AG04449 (cell line): ENCODE measurements at regions of chr9 and their contacts with region 1.

Region 1: DNA sequence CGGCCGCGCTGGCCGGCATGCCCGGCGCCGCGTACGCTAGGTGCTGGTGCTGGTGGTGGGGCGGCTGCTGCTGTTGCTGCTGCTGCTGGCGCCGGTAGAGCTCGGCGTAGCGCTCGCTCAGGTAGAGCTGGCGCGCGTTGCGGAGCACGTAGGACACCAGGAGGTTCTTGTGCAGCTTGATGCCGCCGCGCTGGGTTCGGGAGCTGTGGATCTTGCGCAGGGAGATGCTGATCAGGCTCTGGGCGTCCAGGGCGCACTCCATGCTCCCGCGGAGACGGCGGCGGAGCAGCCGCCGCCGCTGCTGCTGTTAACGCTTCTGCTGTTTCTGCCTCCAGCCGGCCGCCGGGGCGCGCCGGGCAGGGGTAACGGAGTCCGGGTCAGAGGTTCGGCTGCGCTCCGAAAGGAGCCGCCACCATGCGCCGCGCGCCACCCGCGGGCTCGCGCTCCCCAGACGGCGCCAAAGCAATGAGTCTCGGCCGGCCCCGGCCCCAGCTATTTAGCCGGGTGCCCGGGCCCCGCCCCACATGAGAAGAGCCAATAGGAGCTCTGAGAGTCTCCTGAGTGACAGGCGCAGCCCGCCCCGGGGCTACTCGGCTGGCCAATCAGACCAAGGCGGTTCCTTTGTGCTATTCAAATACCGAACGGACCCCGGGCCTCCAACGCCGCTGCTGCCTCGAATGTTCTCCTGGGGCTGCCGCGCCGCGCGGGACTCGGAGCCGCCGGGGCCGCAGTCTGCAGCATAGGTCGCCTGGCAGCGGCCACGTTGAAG is at the start of gene IER5L:
- DNase-seq: no peak
- H3K4me3 ChIP-seq: peak within 1 kb of the TSS; percentile 94
- CTCF ChIP-seq: no peak

Region 2: DNA sequence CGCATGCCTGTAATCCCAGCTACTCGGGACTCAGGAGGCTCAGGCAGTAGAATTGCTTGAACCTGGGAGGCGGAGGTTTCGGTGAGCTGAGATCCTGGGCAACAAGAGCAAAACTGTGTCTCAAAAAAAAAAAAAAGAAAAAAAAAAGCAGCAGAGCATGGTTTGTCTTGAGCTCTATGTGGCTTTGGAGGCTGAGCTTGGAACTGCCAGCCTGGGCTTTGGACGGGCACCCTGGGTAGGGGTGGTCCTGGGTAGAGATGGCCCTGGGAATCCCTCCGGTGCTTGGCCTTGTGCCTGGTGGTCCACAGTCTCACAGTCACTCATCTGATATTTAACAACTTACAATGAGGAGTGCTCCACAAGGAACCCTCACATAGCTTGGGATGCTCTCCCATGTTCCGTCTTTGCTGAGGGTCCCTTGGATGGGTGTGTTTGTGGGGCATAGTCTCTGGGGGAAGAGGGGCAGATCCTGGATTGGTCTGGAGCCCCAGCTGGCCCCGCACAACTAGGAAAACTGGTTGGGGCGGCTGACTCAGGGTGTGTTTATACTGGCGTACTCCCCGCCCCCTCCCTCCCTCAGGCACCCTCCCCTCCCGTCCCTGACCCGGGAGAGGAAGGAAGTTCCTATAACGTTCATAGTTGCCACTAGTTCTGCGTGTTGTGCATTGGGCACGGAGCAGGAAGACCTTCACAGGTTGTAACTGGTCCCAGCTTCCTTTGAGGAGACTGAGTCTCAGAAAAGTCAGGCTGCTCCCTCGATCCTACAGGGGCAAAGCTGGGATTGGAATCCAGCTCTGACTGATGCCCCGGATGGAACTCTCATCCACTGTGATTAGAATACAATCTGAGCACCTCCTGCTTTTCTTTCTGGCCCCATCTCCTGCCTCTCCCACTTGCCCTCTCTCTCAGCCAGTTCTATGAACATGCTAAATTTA is 11.1 kb before region 1 on chr9:
- CTCF ChIA-PET with region 1: interaction called, 51 read pairs
- POLR2A ChIA-PET with region 1: interaction called, 20 read pairs
- DNase-seq: no peak
- H3K4me3 ChIP-seq: peak overlapping the region; percentile 9
- CTCF ChIP-seq: no peak

Region 3: GRCh38 chr9:129320575-129321263 is 142.7 kb after region 1 on chr9:
- CTCF ChIA-PET with region 1: interaction called, 12 read pairs
- POLR2A ChIA-PET with region 1: interaction called, 25 read pairs
- DNase-seq: peak; percentile 63
- H3K4me3 ChIP-seq: peak overlapping the region; percentile 61
- CTCF ChIP-seq: no peak

Region 4: DNA sequence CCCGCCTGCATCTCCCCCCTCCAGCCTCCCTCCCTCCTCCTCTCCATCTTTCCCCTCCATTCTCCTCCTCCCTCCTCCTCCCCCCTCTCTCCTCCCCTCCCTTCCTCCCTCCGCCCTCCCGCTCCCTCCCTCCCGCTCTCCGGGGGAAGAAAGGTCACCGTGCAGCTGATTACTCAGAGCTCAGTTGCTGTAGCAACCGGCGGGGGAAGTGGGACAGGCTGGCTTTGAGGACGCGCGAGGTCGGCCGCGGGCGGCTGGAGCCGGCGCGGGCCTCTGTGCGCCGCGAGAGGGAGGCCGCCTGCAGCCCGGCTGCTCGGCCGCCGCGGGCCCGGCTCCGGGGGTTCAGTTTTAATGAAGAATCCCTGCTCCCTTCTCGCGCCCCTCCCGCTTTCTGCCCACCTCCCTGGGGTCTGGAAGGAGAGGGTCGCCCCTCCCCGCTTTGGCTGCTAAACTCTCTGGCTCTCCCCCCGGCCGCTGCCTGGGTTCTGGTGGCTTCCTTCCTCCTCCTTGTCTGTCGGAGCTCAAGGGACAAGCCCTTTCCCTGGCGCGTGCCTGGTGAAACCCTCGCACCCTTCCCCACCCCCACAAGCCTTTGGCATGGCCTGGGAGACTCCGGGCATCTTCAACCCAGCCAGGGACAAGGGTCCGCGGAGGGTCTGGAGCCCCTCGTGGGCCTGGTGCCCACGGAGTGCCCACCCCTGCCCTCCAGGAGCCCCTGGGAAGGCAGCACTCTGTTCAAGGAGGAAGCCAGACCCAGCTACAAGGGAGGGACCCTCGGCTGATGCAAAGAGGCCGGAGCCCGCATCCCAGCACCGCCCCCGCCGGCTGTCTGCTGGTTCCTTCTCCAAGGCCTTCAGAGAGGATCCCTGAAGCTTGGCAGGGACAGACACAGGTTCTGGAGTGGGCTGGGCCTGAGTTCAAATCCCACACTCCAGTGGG is 282.6 kb after region 1 on chr9:
- CTCF ChIA-PET with region 1: interaction called, 20 read pairs
- POLR2A ChIA-PET with region 1: interaction called, 23 read pairs
- DNase-seq: peak; percentile 92
- H3K4me3 ChIP-seq: peak overlapping the region; percentile 53
- CTCF ChIP-seq: peak; percentile 24

Region 5: DNA sequence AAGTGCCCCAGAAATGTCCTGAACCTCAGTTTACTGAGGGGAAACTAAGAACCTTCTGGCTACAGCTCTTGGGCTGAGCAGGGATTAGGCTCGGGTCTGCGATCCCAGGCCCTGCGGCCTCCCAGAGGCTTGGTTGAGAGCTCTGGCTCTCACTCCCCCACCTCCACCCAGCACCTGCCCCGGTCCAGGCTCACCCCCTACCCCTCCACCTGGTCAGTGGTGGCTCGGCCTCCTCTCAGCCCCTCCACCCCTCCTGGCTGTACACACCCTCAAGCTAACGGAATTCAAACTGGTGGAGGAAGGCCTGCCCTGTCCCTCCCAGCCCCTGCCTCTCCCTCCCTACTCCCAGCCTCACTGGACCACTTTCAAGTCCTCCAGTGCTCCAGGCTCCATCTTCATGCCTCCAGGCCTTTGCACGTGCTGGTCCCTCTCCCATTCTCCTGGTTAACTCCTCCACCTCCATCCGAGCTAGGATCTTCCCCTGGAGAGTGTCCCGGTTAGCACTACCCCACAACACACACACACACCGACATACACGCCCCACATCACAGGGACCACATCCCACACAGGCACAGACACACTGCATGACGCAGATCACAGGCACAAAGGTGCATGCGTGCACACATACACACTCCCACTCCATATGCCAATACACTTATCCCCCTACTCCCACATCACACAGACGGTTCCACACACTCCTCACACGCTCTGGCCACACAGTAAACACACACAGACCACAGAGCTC is 312.0 kb after region 1 on chr9:
- CTCF ChIA-PET with region 1: interaction called, 28 read pairs
- POLR2A ChIA-PET with region 1: interaction called, 170 read pairs
- DNase-seq: no peak
- H3K4me3 ChIP-seq: peak overlapping the region; percentile 52
- CTCF ChIP-seq: no peak

Region 6: DNA sequence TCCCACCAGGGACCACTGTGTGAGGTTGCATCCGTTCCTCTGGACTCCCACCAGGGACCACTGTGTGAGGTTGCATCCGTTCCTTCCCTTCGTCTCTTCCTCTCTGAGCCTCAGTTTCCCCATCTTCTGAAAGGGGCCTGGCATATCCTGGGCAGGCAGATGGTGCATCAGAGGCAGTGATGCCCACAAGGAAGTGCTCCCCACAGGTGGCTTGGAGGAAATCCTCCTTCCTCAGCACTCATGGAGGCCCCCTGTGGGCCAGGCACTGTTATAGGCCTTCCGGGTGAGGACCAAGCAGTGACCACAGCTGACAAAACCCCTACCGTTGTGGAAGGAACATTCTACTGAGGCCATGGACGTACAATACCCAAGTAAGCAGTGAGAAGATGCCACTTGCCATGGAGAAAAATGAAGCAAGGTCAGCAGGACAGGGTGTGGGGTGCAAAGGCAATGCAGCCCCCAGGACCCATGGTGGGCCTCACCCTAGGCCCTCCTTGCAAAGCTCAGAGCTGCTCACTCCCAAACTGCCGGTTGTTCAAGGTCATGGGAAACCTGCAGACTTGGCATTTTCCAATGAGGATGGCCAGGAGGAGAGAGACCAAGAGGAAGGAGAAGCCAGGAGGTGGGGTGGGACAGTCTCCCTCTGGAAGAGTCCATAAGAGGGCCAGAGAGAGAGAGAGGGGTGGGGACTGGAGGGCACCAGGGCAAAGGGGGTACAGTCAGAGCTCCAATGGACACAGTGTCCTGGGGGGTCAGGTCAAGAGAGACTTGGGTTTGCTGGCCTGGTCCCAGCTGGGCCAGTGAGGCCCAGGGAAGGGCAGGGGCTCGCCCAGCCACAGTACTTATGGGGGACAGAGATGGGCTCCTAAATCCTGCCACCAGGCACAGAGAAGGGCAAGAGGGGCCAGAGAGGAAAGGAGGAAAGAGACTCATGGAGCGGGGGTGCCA is 391.8 kb after region 1 on chr9:
- CTCF ChIA-PET with region 1: interaction called, 21 read pairs
- POLR2A ChIA-PET with region 1: interaction called, 19 read pairs
- DNase-seq: no peak
- H3K4me3 ChIP-seq: peak overlapping the region; percentile 3
- CTCF ChIP-seq: peak; percentile 52

Region 7: GRCh38 chr9:129626079-129626624 is 448.2 kb after region 1 on chr9 and contains the start of gene NTMT1:
- CTCF ChIA-PET with region 1: interaction called, 17 read pairs
- POLR2A ChIA-PET with region 1: interaction called, 5 read pairs
- DNase-seq: no peak
- H3K4me3 ChIP-seq: peak within 1 kb of the TSS; percentile 66
- CTCF ChIP-seq: no peak